Calu3 (cell line): ENCODE measurements at regions of chr4 and their contacts with region 1.

Region 1: GRCh38 chr4:183840311-183840710 is 64.8 kb upstream of the STOX2 start:
- DNase-seq: peak; percentile 80
- H3K4me3 Mint-ChIP-seq: no peak overlapping the region
- H3K27ac Mint-ChIP-seq: no peak overlapping the region
- H3K4me1 Mint-ChIP-seq: no peaks in the 10 kb centered on the region
- H3K27me3 Mint-ChIP-seq: no peaks in the 10 kb centered on the region
- CTCF ChIP-seq: peak; percentile 66

Region 2: DNA sequence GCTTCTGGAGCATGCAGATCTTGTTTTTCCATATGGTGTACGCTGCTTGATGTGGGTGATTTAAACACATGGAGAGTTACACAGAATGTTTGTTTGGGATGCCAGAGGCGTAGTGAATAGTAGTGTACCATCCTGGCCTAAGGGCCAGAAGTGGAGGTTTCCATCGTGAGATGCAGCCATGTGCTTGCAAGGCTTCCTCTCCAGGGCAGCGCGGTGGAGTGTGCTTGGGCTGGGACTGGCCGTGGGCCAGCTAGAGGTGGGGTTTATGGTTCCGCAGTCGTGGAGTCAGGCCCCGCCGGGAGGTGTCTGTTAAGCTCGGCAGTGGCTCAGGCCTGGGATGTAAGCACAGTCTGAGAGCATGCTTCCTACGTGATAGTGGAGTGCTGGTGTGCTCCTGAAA is 78.8 kb after region 1 on chr4:
- CTCF ChIA-PET with region 1: no interaction called
- intact Hi-C with region 1: no loop called
- DNase-seq: no peak
- H3K4me3 Mint-ChIP-seq: no peak overlapping the region
- H3K27ac Mint-ChIP-seq: no peak overlapping the region
- H3K4me1 Mint-ChIP-seq: no peaks in the 10 kb centered on the region
- H3K27me3 Mint-ChIP-seq: no peaks in the 10 kb centered on the region
- CTCF ChIP-seq: no peak

Region 3: DNA sequence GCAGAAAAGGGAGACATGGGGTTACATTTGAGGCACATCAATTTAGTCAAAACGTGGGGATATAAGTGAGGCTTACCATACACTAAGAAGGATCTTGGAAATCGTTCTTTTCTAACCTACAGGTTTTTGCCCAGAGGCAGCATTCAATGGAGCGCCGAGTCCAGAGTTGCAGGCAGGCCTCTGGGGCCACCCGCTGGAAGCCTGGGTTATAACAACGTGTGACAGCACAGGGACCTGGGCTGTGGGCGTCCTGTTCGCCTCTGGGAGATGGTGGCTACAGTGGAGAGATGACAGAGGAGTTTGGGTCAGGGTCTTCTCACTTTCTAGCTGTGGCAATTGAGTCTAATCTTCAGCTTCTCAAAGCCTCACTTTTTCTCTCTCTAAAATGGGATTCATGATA is 323.5 kb after region 1 on chr4:
- CTCF ChIA-PET with region 1: no interaction called
- intact Hi-C with region 1: loop called (anchors 1 kb)
- DNase-seq: peak; percentile 70
- H3K4me3 Mint-ChIP-seq: no peak overlapping the region
- H3K27ac Mint-ChIP-seq: no peak overlapping the region
- H3K4me1 Mint-ChIP-seq: no peaks in the 10 kb centered on the region
- H3K27me3 Mint-ChIP-seq: peaks cover 28% of the 10 kb centered on the region
- CTCF ChIP-seq: peak; percentile 37

Region 4: GRCh38 chr4:184250795-184251669 is 410.7 kb after region 1 on chr4:
- CTCF ChIA-PET with region 1: no interaction called
- intact Hi-C with region 1: loop called (anchors 10 kb)
- DNase-seq: peak; percentile 15
- H3K4me3 Mint-ChIP-seq: no peak overlapping the region
- H3K27ac Mint-ChIP-seq: no peak overlapping the region
- H3K4me1 Mint-ChIP-seq: no peaks in the 10 kb centered on the region
- H3K27me3 Mint-ChIP-seq: no peaks in the 10 kb centered on the region
- CTCF ChIP-seq: peak; percentile 35